ENCODE measurements at regions of chr2 and their contacts with region 1.

Region 1: DNA sequence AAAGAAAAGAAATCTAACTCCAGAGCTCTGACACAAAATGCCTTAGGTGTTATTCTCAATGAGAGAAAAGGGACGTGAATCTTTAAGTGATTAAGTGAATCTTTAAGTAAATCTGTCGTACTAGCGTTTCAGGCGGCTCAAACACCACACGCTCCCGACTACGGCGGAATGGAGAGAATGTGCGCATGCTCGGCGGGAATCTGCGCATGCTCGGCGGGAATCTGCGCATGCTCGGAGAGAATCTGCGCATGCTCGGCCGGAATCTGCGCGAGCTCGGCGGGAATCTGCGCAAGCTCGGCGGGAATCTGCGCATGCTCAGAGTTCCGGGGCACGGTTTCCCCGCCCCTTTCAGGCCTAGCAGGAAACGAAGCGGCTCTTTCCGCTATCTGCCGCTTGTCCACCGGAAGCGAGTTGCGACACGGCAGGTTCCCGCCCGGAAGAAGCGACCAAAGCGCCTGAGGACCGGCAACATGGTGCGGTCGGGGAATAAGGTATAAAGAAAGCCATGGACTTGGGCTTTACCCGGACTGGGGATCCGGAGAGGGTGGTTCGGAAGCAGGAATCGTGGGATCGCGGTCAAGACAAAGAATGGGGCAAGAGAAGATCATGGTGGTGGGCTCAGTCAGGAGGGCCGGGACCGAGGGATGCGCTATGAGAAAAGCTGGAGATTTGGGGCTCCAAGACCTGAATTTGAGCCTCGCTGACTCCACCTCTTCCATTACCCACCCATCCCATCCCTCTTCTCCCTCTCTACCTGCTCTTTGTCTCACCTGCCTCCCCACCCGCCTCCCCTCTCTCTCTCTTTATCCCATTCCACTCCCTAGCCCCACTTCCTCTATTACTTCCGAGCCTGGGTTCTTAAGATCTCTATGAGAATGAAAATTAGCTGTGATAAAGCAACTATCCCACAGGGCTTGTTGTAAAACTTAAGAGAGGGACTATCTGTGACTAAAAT is at the start of gene XRCC5:
- DNase-seq: peak; percentile 97
- H3K4me3 Mint-ChIP-seq: peak within 1 kb of the TSS; percentile 99
- H3K27ac Mint-ChIP-seq: peak within 1 kb of the TSS; percentile 98
- H3K4me1 Mint-ChIP-seq: peaks cover 55% of the 10 kb centered on the region
- H3K27me3 Mint-ChIP-seq: no peaks in the 10 kb centered on the region
- total RNA-seq, gene XRCC5: 296 to 302 TPM

Region 2: GRCh38 chr2:216015722-216016464 is 93.4 kb before region 1 on chr2:
- CTCF ChIA-PET with region 1: interaction called, 9 read pairs
- POLR2A ChIA-PET with region 1: interaction called, 19 read pairs
- DNase-seq: peak; percentile 74
- H3K4me3 Mint-ChIP-seq: peak overlapping the region; percentile 25
- H3K27ac Mint-ChIP-seq: peak overlapping the region; percentile 91
- H3K4me1 Mint-ChIP-seq: peaks cover 62% of the 10 kb centered on the region
- H3K27me3 Mint-ChIP-seq: no peaks in the 10 kb centered on the region

Region 3: DNA sequence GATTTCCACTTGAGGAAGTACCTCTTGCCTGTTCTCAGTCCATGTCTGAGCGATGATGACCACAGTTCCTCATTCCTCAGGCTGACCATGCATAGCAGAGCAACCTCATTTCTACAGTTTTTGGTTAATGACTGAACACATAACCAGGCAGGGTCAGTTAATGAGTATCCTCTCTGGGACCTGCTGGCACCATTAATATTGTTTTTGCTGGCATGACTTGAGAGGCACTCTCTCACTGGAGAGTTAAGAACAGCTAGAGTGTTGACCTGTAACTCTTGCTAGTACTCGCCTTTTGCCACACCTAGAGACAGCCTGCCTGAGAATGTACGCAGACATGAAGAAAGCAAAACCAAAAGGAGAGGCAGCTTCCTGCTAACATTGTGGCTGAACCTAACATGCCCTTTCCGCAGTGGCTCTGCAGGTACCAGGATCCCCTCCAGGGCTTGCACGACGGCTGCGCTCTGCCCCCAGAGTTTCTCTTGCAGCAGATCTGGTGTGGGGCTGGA is 51.5 kb before region 1 on chr2:
- CTCF ChIA-PET with region 1: interaction called, 32 read pairs
- POLR2A ChIA-PET with region 1: interaction called, 16 read pairs
- DNase-seq: peak; percentile 71
- H3K4me3 Mint-ChIP-seq: peak overlapping the region; percentile 64
- H3K27ac Mint-ChIP-seq: peak overlapping the region; percentile 95
- H3K4me1 Mint-ChIP-seq: peaks cover 41% of the 10 kb centered on the region
- H3K27me3 Mint-ChIP-seq: no peaks in the 10 kb centered on the region

Region 4: DNA sequence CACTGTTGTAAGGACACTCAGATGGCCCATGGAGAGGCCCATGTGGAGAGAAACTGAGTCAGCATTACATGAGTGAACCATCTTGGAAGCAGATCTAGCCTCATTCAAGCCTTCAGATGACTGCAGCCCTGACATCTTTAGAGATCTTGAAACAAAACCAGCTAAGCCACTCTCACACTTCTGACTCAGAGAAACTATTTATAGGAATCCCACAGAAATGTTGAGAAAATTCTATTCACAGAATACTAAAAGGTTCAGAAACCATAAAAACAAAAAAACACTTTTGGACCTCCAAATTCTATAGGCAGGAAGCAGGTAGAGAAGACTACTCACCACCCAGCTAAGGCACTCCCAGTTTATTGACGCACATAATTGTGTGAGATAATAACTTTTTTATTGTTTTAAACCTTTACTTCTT is 18.9 kb before region 1 on chr2:
- CTCF ChIA-PET with region 1: interaction called, 3 read pairs
- POLR2A ChIA-PET with region 1: interaction called, 103 read pairs
- DNase-seq: no peak
- H3K4me3 Mint-ChIP-seq: no peak overlapping the region
- H3K27ac Mint-ChIP-seq: no peak overlapping the region
- H3K4me1 Mint-ChIP-seq: peaks cover 23% of the 10 kb centered on the region
- H3K27me3 Mint-ChIP-seq: no peaks in the 10 kb centered on the region

Region 5: DNA sequence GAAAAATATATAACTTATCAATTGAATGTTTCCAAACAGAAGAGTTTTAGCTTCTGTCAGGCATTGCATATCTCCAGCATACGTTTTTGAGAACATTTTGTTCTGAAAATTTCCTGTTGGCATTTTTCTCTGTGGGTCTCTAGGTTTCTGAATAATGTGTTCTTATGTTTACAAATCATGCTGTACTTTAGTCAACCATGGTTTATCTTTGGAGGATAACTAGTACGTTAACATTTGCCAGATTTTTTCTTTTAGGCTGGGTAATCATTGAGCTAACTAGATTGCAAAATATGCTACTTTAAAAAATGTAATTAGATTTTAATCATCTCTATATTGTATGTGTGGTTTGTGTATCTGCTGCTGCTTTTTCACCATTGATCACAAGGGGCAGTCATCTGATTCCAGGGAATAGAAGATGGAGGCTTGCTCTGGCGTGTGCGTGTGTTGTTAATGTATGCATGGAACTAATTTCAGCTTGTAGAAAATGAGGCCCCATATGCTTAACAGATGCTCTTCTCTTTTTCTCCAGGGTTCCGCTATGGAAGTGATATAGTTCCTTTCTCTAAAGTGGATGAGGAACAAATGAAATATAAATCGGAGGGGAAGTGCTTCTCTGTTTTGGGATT is 21.2 kb after region 1 on chr2:
- CTCF ChIA-PET with region 1: interaction called, 9 read pairs
- POLR2A ChIA-PET with region 1: interaction called, 13 read pairs
- DNase-seq: no peak
- H3K4me3 Mint-ChIP-seq: no peak overlapping the region
- H3K27ac Mint-ChIP-seq: no peak overlapping the region
- H3K4me1 Mint-ChIP-seq: peaks cover 52% of the 10 kb centered on the region
- H3K27me3 Mint-ChIP-seq: no peaks in the 10 kb centered on the region